ENCODE measurements at regions of chr7 and their contacts with region 1.

Region 1: GRCh38 chr7:92691578-92691977 is 101.4 kb upstream of the FAM133B start:
- DNase-seq: no peak
- ATAC-seq: peak; percentile 61
- H3K4me3 Mint-ChIP-seq: no peak overlapping the region
- H3K27ac Mint-ChIP-seq: no peak overlapping the region
- H3K4me1 Mint-ChIP-seq: peaks cover 9% of the 10 kb centered on the region
- H3K27me3 Mint-ChIP-seq: no peaks in the 10 kb centered on the region
- CTCF ChIP-seq: no peak

Region 2: DNA sequence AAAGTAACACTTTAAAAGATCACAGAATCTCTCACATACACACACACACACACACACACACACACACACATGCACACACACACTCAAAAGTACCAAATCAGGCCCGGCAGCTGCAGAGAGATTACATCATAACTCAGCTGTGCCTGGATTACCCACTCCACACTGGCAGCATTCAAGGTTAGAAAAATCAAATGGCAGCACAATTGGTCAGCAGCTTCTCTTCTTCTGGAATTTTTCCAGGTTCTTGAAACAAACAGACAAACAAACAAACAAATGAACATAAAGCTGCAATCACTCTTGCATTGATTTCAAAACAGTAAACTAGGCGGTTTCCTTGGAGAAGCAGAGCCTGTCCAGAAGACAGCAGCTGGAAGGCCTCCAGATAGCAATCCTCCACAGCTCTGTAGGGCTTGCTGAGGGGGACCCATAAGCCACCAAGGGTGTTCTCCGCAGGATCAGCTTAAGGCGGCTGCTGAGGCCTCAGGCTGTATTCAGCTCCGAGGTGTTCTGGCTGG is 76.9 kb before region 1 on chr7:
- CTCF ChIA-PET with region 1: no interaction called
- POLR2A ChIA-PET with region 1: no interaction called
- intact Hi-C with region 1: no loop called
- DNase-seq: no peak
- ATAC-seq: no peak
- H3K4me3 Mint-ChIP-seq: no peak overlapping the region
- H3K27ac Mint-ChIP-seq: no peak overlapping the region
- H3K4me1 Mint-ChIP-seq: no peaks in the 10 kb centered on the region
- H3K27me3 Mint-ChIP-seq: no peaks in the 10 kb centered on the region
- CTCF ChIP-seq: no peak

Region 3: DNA sequence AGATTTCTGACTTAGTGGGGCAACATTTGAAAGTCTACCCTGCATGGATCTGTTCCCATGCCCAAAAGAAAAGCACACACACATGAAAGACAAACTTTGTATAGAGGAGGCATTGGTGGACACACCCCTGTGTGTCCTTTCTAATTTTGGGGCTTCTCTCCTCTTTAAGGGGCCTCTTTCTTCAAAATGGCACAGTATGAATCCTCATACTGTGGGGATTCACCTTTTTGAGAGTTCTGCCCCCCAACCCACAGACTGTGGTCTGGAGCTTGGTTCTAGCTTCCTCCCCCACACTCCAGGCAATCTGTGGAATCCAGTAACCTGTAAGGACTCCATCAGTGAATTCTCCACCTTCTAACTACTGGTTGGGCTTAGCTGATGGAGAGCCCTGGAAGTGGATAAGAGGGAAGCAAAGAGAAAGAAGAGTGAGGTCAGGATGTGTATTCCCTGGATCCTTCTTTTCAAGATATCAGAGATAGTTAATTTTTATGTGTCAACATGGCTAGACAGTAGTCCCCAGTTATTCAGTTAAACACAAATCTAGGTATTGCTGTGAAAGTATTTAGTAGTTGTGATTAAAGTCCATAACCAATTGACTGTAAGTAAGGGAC is 177.2 kb after region 1 on chr7:
- CTCF ChIA-PET with region 1: no interaction called
- POLR2A ChIA-PET with region 1: no interaction called
- intact Hi-C with region 1: loop called (anchors 1 kb)
- DNase-seq: no peak
- ATAC-seq: no peak
- H3K4me3 Mint-ChIP-seq: no peak overlapping the region
- H3K27ac Mint-ChIP-seq: no peak overlapping the region
- H3K4me1 Mint-ChIP-seq: no peaks in the 10 kb centered on the region
- H3K27me3 Mint-ChIP-seq: peaks cover 1% of the 10 kb centered on the region
- CTCF ChIP-seq: no peak

Region 4: GRCh38 chr7:93015779-93016481 is 324.4 kb after region 1 on chr7:
- CTCF ChIA-PET with region 1: no interaction called
- POLR2A ChIA-PET with region 1: no interaction called
- intact Hi-C with region 1: no loop called
- DNase-seq: no peak
- ATAC-seq: no peak
- H3K4me3 Mint-ChIP-seq: no peak overlapping the region
- H3K27ac Mint-ChIP-seq: no peak overlapping the region
- H3K4me1 Mint-ChIP-seq: no peaks in the 10 kb centered on the region
- H3K27me3 Mint-ChIP-seq: no peaks in the 10 kb centered on the region
- CTCF ChIP-seq: no peak